ENCODE measurements at regions of chr22 and their contacts with region 1.

Region 1: DNA sequence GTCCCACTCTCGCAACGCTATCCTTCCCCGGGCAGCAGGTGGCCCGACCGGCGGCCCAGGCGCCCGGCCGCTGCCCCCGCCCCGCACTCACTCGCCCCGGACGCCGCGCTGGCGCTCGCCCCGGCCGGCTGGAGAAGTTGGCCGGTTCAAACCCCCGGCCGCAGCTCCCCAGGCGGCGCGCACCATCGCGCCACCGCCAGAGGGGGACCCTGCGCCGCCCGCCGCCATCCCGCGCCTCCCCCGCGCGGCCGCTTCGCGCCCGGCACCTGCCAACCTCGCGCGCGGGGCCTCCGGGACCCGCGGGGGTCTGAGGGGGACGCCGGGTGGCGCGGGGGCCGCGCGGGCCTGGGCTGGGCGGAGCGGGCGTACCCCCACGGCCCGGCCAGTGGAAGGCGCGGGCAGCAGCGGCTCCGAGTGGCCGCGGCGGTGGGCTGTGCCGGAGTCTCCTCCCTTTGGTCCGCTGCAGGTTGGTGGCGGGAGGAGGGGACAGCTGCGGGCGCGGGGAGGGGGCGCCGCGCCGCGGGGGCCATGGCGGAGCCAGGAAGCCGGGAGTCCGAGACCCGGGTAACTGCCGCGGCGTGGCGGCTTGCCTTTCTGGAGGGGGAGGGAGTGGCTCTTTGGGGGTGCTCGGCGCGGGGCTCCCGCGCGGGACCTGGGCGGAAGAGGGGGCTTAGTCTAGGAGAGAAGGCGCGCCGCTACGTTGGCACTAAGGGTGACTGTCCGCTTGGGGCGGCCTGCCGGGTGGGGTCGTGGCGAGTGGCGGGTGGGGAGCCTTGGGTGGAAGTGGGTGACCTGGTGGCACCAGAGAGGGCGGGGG is at the starts of genes MPST and TST:
- DNase-seq: peak in 1 of 2 experiments; percentile 79
- H3K4me3 ChIP-seq: peak within 1 kb of the TSS; percentile 70 to 86 (median 78)
- H3K27ac ChIP-seq: peak within 1 kb of the TSS; percentile 89; the same call in 1 of the 2 replicates
- H3K4me1 ChIP-seq: peaks cover 0 to 21% (median 11%) of the 10 kb centered on the region in 4 experiments; a peak in 6 of 7 replicates
- H3K27me3 ChIP-seq: no peaks in the 10 kb centered on the region
- CTCF ChIP-seq: no peak; a peak in 1 of 4 replicates
- EP300 ChIP-seq: peak in 1 of 2 experiments; percentile 83; a peak in 2 of 3 replicates
- POLR2A ChIP-seq: peak in 1 of 2 experiments; percentile 76; a peak in 2 of 3 replicates
- RAD21 ChIP-seq: no peak
- total RNA-seq, gene MPST: 86.0 and 89.9 TPM in 2 replicates
- total RNA-seq, gene TST: 22.6 and 23.6 TPM in 2 replicates

Region 2: DNA sequence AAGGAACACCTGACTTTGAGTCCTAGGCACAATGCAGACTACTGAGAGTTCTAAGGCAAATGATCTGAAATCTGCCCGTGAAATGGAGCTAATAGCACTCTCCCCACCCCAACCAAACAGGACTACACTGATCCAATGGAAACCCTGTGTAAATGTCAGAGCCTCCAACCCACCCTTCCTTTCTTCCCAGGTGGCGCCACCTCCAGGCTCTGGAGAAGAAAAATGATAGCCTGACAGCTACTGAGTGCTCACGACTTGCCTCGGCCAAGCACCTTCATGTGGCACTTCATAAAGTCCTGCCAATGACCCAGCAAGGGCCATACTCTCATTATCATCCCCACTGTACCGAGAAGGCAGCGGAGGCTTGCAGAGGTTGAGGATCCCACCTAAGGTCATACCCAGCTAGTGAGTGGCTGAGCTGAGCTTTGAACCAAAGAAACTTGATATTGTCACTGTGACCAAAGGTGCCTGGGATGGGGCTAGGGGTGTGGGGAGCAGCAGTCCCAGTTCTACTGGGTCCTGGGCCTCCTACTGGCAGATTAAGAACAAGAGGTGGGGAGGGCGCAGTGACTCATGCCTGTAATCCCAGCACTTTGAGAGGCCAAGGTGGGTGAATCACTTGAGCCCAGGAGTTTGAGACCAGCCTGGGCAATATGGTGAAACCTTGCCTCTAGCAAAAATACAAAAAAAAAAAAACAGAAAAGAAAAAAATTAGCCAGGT is 20.7 kb before region 1 on chr22:
- CTCF ChIA-PET with region 1: interaction called, 25 read pairs
- POLR2A ChIA-PET with region 1: interaction called, 6 read pairs
- DNase-seq: no peak
- H3K4me3 ChIP-seq: no peak overlapping the region
- H3K27ac ChIP-seq: no peak overlapping the region
- H3K4me1 ChIP-seq: peaks cover 0 to 7% (median 2%) of the 10 kb centered on the region in 4 experiments; a peak in 6 of 7 replicates
- H3K27me3 ChIP-seq: 0 out of 7 replicates have a peak, but pooled peaks cover 0 to 3% (median 0%) of the 10 kb centered on the region in 4 experiments
- CTCF ChIP-seq: peak; percentile 47 to 57 (median 54)
- EP300 ChIP-seq: no peak
- POLR2A ChIP-seq: no peak
- RAD21 ChIP-seq: peak; percentile 34 to 48; a peak in 3 of 4 replicates

Region 3: DNA sequence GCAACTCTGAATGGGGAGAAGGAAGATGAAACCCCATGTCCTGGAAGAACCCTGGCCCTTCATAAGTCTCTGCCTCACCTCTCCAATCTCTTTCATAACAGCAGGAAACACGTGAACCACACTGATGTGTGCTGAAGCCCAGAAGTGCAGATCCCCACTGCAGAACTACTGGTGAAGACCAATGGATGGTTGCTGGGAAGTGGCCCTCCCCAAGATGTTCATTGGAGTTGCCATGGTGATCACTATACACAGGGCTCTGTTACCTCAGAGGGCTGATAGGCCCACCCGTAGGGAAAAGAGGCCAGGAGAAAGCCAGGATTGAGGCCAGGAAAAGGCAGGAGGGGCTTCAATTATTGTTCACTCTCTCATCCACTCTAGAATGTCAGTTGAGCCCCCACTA is 11.9 kb before region 1 on chr22:
- CTCF ChIA-PET with region 1: interaction called, 25 read pairs
- POLR2A ChIA-PET with region 1: interaction called, 18 read pairs
- DNase-seq: no peak
- H3K4me3 ChIP-seq: no peak overlapping the region
- H3K27ac ChIP-seq: no peak overlapping the region
- H3K4me1 ChIP-seq: peaks cover 0 to 1% (median under 1%) of the 10 kb centered on the region in 4 experiments; a peak in 3 of 7 replicates
- H3K27me3 ChIP-seq: peaks cover 0 to 3% (median 0%) of the 10 kb centered on the region in 4 experiments; a peak in 2 of 7 replicates
- CTCF ChIP-seq: no peak
- EP300 ChIP-seq: no peak
- POLR2A ChIP-seq: no peak
- RAD21 ChIP-seq: no peak

Region 4: GRCh38 chr22:37032546-37033460 is 13.3 kb after region 1 on chr22:
- CTCF ChIA-PET with region 1: interaction called, 37 read pairs
- POLR2A ChIA-PET with region 1: interaction called, 33 read pairs
- DNase-seq: peak in 1 of 2 experiments; percentile 50
- H3K4me3 ChIP-seq: no peak overlapping the region
- H3K27ac ChIP-seq: no peak overlapping the region
- H3K4me1 ChIP-seq: peaks cover 0 to 11% (median 5%) of the 10 kb centered on the region in 4 experiments; a peak in 4 of 7 replicates
- H3K27me3 ChIP-seq: 0 out of 7 replicates have a peak, but pooled peaks cover 0 to 3% (median 0%) of the 10 kb centered on the region in 4 experiments
- CTCF ChIP-seq: no peak
- EP300 ChIP-seq: no peak
- POLR2A ChIP-seq: no peak
- RAD21 ChIP-seq: no peak

Measured in H1 (cell line).